MCF 10A (cell line): ENCODE measurements at regions of chr2 and their contacts with region 1.

Region 1: DNA sequence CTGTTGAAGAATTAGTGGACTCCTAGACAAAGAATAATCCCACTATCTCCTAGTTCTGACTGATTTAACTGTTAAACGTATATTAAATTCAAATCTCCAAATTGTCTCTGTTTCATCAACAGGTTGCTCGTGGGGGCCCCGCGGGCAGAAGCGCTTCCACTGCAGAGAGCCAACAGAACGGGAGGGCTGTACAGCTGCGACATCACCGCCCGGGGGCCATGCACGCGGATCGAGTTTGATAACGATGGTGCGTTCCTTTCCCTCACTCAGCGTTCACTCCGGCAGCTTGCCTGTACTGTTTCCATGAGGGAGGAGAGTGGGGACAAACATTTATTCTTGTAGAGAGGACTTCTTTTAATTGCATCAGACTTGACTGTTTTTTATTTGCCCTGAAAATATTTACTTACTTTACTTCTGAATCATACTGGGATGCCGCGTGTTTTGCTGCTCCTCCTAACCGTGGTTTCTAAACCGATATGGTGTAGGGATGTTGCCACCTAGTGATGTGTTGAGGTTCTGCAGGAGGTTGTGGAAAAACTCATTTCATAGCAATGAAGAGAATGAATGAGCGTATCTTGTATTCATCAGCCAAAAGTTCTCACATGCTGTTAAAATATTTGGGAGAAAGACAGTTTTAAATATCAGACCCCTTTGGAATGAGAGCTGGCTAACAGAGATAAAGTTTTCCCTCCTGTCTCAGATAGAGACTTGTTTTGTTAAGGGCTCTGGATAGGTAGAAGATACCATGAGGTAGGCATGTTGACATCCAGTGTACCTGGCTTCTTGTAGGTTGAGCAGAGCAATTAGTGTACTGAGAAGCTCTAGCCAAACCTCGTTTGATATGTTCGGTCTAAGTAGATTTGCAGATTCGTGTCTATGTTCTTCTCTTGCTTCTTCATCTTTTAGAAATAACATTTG is 38.3 kb downstream of the ITGA6 start:
- DNase-seq: peak; percentile 82
- H3K4me3 Mint-ChIP-seq: peak overlapping the region; percentile 38
- H3K27ac Mint-ChIP-seq: peak overlapping the region; percentile 95
- H3K4me1 Mint-ChIP-seq: peaks cover 58% of the 10 kb centered on the region
- H3K27me3 Mint-ChIP-seq: no peaks in the 10 kb centered on the region
- CTCF ChIP-seq: peak; percentile 87

Region 2: GRCh38 chr2:172172513-172173173 is 293.0 kb before region 1 on chr2:
- CTCF ChIA-PET with region 1: interaction called, 148 read pairs
- POLR2A ChIA-PET with region 1: interaction called, 34 read pairs
- intact Hi-C with region 1: loop called (anchors 1 kb)
- DNase-seq: peak; percentile 74
- H3K4me3 Mint-ChIP-seq: peak overlapping the region; percentile 66
- H3K27ac Mint-ChIP-seq: no peak overlapping the region
- H3K4me1 Mint-ChIP-seq: no peaks in the 10 kb centered on the region
- H3K27me3 Mint-ChIP-seq: no peaks in the 10 kb centered on the region
- CTCF ChIP-seq: peak; percentile 93

Region 3: DNA sequence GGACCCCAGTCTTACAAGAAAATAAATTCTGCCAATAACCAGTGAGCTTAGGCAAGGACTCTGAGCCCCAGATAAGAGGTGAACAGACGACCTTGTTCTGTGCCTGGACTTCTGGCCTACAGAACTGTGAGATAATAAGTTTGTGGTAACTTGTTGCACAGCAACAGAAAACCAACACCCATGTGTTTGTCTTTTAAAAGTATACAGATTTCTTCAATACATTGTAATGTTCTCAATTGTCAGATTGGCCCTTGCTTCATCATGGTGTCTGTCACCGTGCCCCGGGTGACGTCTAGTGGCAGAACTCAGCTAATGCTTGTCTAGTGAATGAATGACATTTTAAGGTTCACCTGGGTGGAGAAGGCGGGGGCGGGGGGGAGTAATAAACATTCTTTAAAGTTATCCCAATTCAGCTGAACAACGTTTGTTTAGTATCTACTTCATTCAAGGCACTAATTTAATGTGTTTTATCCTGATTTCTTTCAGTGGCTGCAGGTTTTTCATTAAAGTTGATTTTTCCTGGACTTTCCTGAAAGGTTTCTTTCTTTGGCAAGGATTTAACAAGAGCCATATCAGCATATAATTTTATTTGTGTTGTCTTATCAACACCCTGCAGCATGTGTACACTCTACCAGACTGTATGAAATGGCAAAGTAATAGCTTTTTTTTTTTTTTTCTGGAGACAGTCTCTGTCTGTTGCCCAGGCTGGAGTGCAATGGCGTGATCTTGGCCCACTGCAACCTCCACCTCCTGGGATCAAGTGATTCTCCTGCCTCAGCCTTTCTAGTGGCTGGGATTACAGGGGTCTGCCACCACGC is 239.2 kb before region 1 on chr2:
- CTCF ChIA-PET with region 1: interaction called, 31 read pairs
- POLR2A ChIA-PET with region 1: interaction called, 124 read pairs
- intact Hi-C with region 1: no loop called
- DNase-seq: no peak
- H3K4me3 Mint-ChIP-seq: no peak overlapping the region
- H3K27ac Mint-ChIP-seq: no peak overlapping the region
- H3K4me1 Mint-ChIP-seq: peaks cover 55% of the 10 kb centered on the region
- H3K27me3 Mint-ChIP-seq: no peaks in the 10 kb centered on the region
- CTCF ChIP-seq: peak; percentile 23

Region 4: GRCh38 chr2:172285010-172285621 is 180.6 kb before region 1 on chr2:
- CTCF ChIA-PET with region 1: interaction called, 54 read pairs
- POLR2A ChIA-PET with region 1: interaction called, 12 read pairs
- intact Hi-C with region 1: loop called (anchors 1 kb)
- DNase-seq: peak; percentile 41
- H3K4me3 Mint-ChIP-seq: no peak overlapping the region
- H3K27ac Mint-ChIP-seq: no peak overlapping the region
- H3K4me1 Mint-ChIP-seq: peaks cover 22% of the 10 kb centered on the region
- H3K27me3 Mint-ChIP-seq: no peaks in the 10 kb centered on the region
- CTCF ChIP-seq: no peak

Region 5: DNA sequence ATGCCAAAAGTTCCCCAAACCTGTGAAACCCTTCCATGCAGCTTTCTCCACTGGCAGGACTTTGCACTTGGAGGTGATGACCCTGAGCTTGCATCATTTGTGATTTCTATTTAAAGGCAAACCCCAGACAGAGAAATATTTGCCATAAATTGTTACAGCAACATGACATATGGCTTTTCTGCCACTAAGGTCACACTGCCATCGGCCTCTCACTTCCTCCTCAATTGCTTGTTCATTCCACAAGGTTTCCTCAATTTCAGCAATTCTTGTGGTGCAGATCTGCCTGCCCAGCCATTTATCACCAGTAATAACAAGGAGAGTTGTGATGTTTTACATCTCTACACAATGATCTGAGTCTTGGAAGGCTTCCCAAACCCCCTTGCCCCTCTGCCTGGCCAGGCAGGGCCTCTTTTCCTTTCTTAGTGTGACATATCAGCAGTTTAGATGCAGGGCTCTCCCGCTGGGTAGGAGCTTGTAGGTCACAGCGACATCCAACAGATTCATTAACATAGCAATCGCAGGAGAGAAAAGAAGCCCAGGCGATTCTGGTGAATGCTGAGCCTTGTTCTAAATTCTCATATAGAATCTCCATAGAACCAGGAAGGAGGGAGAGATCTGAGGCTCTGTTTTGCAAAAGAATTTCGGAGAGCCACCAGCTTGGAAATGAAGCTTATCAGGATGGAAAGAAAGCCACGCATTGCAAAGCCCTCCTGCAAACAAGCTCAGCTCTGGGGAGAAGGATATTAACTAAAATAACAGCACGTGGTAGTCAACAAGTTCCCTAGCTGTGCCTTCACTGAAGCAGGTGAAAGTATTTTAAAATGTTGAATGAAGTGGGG is 85.0 kb before region 1 on chr2:
- CTCF ChIA-PET with region 1: no interaction called
- POLR2A ChIA-PET with region 1: no interaction called
- intact Hi-C with region 1: no loop called
- DNase-seq: no peak
- H3K4me3 Mint-ChIP-seq: no peak overlapping the region
- H3K27ac Mint-ChIP-seq: no peak overlapping the region
- H3K4me1 Mint-ChIP-seq: no peaks in the 10 kb centered on the region
- H3K27me3 Mint-ChIP-seq: no peaks in the 10 kb centered on the region
- CTCF ChIP-seq: no peak

Region 6: GRCh38 chr2:172442072-172442895 is 23.4 kb before region 1 on chr2:
- CTCF ChIA-PET with region 1: interaction called, 536 read pairs
- POLR2A ChIA-PET with region 1: interaction called, 231 read pairs
- intact Hi-C with region 1: no loop called
- DNase-seq: peak; percentile 99
- H3K4me3 Mint-ChIP-seq: peak overlapping the region; percentile 65
- H3K27ac Mint-ChIP-seq: peak overlapping the region; percentile 98
- H3K4me1 Mint-ChIP-seq: peaks cover 45% of the 10 kb centered on the region
- H3K27me3 Mint-ChIP-seq: no peaks in the 10 kb centered on the region
- CTCF ChIP-seq: no peak

Region 7: DNA sequence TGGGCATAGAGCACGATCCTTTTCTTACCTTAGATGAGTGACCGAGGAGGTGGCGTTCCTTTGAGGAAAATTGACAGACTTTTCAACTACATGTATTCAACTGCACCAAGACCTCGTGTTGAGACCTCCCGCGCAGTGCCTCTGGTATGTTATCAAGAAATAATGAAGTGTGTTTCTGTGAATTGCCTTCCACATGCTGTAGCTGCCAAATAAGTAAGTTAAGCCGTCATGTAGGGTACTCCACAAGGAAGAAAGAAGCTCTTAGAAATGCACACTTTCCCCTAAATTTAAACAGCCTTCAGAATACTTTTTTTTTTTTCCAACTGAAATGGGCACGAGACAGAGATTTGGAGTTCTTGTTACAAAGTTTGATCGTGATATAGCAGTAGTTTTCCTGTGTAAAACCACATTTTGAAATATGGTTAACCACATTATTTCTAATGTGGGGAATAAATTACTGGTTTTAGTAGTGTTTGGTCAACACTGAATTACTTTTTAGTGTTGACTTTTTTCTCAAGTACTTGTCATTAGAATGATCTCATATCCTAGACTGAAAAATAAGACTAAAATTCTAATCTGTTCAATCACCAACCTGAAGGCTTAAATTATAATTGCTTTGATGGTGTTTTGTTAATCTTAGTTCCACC is 120.7 kb after region 1 on chr2:
- CTCF ChIA-PET with region 1: no interaction called
- POLR2A ChIA-PET with region 1: no interaction called
- intact Hi-C with region 1: no loop called
- DNase-seq: no peak
- H3K4me3 Mint-ChIP-seq: no peak overlapping the region
- H3K27ac Mint-ChIP-seq: no peak overlapping the region
- H3K4me1 Mint-ChIP-seq: no peaks in the 10 kb centered on the region
- H3K27me3 Mint-ChIP-seq: no peaks in the 10 kb centered on the region
- CTCF ChIP-seq: no peak